CD4-positive, alpha-beta memory T cell (primary cell): ENCODE measurements at regions of chr7 and their contacts with region 1.

Region 1: GRCh38 chr7:154927624-154928143 is 75.2 kb downstream of the PAXIP1 start:
- DNase-seq: peak; percentile 76 to 84 (median 77)
- H3K4me3 ChIP-seq: peak overlapping the region; percentile 74 to 89
- H3K4me3 Mint-ChIP-seq: peak overlapping the region; percentile 91 to 98 (median 94)
- H3K27ac ChIP-seq: peak overlapping the region; percentile 85
- H3K27ac Mint-ChIP-seq: peak overlapping the region; percentile 95 to 99 (median 98)
- H3K4me1 ChIP-seq: peaks cover 25% of the 10 kb centered on the region
- H3K4me1 Mint-ChIP-seq: peaks cover 22 to 42% (median 32%) of the 10 kb centered on the region in 4 donors
- H3K27me3 ChIP-seq: no peaks in the 10 kb centered on the region
- H3K27me3 Mint-ChIP-seq: no peaks in the 10 kb centered on the region

Region 2: DNA sequence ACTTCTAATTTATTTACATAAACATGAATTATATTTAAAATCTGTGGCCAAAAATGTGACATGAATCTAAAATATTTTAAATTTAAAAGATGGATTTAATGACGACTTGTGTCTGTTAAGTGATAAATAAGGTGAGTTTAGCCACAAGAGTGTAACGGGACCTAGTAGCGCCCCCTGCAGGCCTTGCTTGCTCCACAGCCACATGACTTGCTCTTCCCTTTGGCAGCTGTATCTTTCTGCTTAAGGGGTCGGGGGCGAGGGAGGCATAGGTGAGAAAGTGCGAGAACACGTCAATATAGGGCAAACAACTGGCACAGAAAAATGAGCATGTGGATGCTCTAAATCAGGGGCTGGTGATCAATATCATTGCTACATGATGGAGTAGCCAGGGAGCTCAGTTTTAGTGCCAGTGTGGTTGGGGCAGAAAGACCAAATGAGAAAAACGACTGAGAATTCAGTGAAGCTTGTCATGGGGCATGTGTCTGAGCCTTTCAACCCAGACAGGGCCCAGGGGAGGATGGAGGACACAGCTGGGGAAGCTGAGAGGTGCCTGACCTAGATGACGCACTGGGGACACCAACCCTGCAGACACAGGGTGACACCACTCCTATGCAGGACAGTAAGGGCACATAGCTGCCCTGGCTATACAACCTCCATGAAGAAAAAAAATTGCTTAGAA is 25.5 kb after region 1 on chr7:
- CTCF ChIA-PET with region 1: interaction called, 115 read pairs
- POLR2A ChIA-PET with region 1: interaction called, 12 read pairs
- intact Hi-C with region 1: loop called (anchors 1 kb)
- DNase-seq: peak; percentile 53 to 67 (median 59)
- H3K4me3 ChIP-seq: no peak overlapping the region
- H3K4me3 Mint-ChIP-seq: no peak overlapping the region
- H3K27ac ChIP-seq: no peak overlapping the region
- H3K27ac Mint-ChIP-seq: peak overlapping the region in 1 of 7 donors; percentile 60
- H3K4me1 ChIP-seq: no peaks in the 10 kb centered on the region
- H3K4me1 Mint-ChIP-seq: peaks cover 0 to 4% (median 1%) of the 10 kb centered on the region in 4 donors
- H3K27me3 ChIP-seq: no peaks in the 10 kb centered on the region
- H3K27me3 Mint-ChIP-seq: no peaks in the 10 kb centered on the region

Region 3: DNA sequence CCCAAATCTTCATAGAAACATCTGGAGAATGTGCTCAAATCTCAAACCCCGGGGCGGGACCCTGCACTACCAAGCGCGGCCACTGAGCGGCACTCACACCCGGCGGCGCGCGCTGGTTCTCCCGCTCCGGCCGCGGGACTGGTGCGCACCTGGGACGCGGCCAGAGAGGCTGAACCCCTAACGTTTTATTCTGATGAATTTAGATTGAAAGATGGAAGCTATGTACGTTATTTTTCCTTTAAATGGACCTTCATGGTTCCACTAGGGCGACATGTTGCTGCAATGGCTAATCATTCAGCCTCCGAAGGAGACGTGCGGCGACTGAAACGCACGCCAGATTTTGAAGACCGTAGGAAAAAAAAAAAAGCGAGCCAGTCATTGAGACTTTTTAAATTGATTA is 263.0 kb after region 1 on chr7:
- CTCF ChIA-PET with region 1: interaction called, 21 read pairs
- POLR2A ChIA-PET with region 1: interaction called, 3 read pairs
- intact Hi-C with region 1: loop called (anchors 1 kb)
- DNase-seq: peak in 4 of 5 donors; percentile 36 to 53 (median 40)
- H3K4me3 ChIP-seq: no peak overlapping the region
- H3K4me3 Mint-ChIP-seq: peak overlapping the region in 1 of 8 donors; percentile 26
- H3K27ac ChIP-seq: no peak overlapping the region
- H3K27ac Mint-ChIP-seq: no peak overlapping the region
- H3K4me1 ChIP-seq: no peaks in the 10 kb centered on the region
- H3K4me1 Mint-ChIP-seq: peaks cover 1 to 7% (median 4%) of the 10 kb centered on the region in 4 donors
- H3K27me3 ChIP-seq: no peaks in the 10 kb centered on the region
- H3K27me3 Mint-ChIP-seq: peaks cover 3 to 18% of the 10 kb centered on the region in 2 donors

Region 4: GRCh38 chr7:155344600-155345433 is 417.1 kb after region 1 on chr7:
- CTCF ChIA-PET with region 1: interaction called, 86 read pairs
- POLR2A ChIA-PET with region 1: interaction called, 11 read pairs
- intact Hi-C with region 1: loop called (anchors 1 kb)
- DNase-seq: peak; percentile 71 to 85 (median 79)
- H3K4me3 ChIP-seq: peak overlapping the region; percentile 3 to 54
- H3K4me3 Mint-ChIP-seq: peak overlapping the region in 7 of 8 donors; percentile 44 to 83 (median 77)
- H3K27ac ChIP-seq: no peak overlapping the region
- H3K27ac Mint-ChIP-seq: peak overlapping the region in 3 of 7 donors; percentile 43 to 86 (median 79)
- H3K4me1 ChIP-seq: peaks cover 13% of the 10 kb centered on the region
- H3K4me1 Mint-ChIP-seq: peaks cover 2 to 6% (median 4%) of the 10 kb centered on the region in 4 donors
- H3K27me3 ChIP-seq: peaks cover 4% of the 10 kb centered on the region
- H3K27me3 Mint-ChIP-seq: peaks cover 0 to 3% of the 10 kb centered on the region in 2 donors

Region 5: DNA sequence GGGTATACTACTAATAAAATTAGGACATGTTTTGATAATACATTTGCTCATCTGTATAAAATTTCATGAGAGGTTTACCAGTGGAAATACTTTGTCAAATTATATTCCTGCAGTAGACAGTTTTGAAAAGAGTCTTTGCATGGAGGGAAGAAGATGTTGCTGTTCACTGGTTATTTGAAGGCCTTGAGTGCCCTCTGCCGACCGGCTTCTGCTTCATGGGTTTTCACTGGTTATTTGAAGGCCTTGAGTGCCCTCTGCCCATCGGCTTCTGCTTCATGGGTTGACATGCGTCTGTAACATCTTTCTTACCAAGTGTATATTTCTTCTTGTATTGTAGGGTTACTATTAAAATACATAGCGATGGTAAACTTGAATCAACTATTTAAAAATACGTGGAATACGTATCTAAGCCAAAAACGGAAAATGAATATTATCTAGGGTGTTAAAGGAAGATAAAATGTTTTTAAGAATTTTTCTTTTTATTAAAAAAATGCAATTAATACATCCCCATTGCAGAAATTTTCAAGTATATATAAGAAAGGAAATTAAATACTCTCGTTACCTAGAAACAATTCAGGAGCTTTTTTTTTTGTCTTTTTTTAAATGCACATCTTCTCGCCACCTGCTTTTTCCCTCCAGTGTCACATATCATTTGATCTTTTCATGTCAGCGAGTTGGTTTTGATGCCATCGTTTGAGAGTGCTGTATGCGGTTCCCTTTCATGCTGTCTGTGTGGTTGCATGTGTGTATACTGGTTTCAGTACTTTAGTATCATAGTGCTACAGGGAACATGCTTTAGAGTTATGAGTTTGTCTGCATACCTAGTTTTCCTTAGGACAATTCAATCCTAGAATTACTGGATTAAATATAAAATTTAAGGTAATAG is 811.2 kb after region 1 on chr7:
- CTCF ChIA-PET with region 1: interaction called, 3 read pairs
- POLR2A ChIA-PET with region 1: no interaction called
- intact Hi-C with region 1: loop called (anchors 2 kb)
- DNase-seq: peak; percentile 42 to 61 (median 51)
- H3K4me3 ChIP-seq: no peak overlapping the region
- H3K4me3 Mint-ChIP-seq: peak overlapping the region in 6 of 8 donors; percentile 21 to 50 (median 38)
- H3K27ac ChIP-seq: no peak overlapping the region
- H3K27ac Mint-ChIP-seq: peak overlapping the region; percentile 22 to 90 (median 39)
- H3K4me1 ChIP-seq: peaks cover 12% of the 10 kb centered on the region
- H3K4me1 Mint-ChIP-seq: peaks cover 14 to 75% (median 34%) of the 10 kb centered on the region in 4 donors
- H3K27me3 ChIP-seq: no peaks in the 10 kb centered on the region
- H3K27me3 Mint-ChIP-seq: no peaks in the 10 kb centered on the region

Region 6: DNA sequence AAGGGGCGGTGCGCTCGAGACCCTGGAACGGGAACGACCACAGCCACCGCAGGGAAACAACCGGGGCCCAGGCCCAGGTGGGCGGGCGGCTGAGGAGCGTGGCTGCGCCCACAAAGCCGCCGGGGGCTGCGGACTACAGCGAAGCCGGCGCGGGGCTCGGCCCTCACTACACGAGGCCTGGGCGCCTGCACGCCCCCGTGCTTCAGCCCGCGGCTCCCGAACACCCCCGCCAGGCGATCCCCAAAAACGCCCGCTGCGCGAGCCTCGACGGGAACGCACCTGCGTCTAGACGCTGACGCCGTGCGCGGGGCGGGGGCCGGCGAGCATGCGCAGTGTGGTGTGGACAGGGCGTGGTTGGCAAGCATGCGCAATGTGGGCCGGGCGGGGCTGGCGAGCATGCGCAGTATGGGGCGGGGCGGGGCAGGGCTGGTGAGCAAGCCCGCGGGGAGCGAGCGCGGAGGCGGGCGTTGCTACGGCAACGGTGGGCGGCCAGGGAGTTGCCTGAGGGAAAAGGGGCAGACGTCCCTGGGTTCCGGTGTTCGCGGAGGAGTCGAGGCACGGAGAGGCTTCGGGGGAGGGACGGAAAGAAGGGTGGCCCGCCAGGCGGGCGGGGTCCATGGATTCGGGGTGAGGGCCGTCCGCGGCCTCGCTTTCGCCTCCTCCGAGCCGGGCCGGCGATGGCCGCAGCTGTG is 1712.7 kb after region 1 on chr7 and contains the start of gene RNF32:
- CTCF ChIA-PET with region 1: no interaction called
- POLR2A ChIA-PET with region 1: no interaction called
- intact Hi-C with region 1: loop called (anchors 2 kb)
- DNase-seq: peak; percentile 87 to 94 (median 91)
- H3K4me3 ChIP-seq: peak within 1 kb of the TSS; percentile 44 to 78
- H3K4me3 Mint-ChIP-seq: peak within 1 kb of the TSS; percentile 81 to 94 (median 92)
- H3K27ac ChIP-seq: peak within 1 kb of the TSS; percentile 80
- H3K27ac Mint-ChIP-seq: peak within 1 kb of the TSS; percentile 87 to 98 (median 96)
- H3K4me1 ChIP-seq: peaks cover 14% of the 10 kb centered on the region
- H3K4me1 Mint-ChIP-seq: peaks cover 3 to 22% (median 12%) of the 10 kb centered on the region in 4 donors
- H3K27me3 ChIP-seq: no peaks in the 10 kb centered on the region
- H3K27me3 Mint-ChIP-seq: peaks cover 0 to 3% of the 10 kb centered on the region in 2 donors
- total RNA-seq, gene RNF32: 1.3 to 2.0 TPM